GM12878 (cell line): ENCODE measurements at regions of chr2 and their contacts with region 1.

Region 1: GRCh38 chr2:172465417-172466334 is 38.3 kb downstream of the ITGA6 start:
- DNase-seq: no peak
- ATAC-seq: peak; percentile 65
- H3K4me3 ChIP-seq: no peak overlapping the region
- H3K27ac ChIP-seq: no peak overlapping the region
- H3K4me1 ChIP-seq: peaks cover 8% of the 10 kb centered on the region
- H3K27me3 ChIP-seq: peaks cover 0 to 5% of the 10 kb centered on the region in 2 experiments; a peak in 3 of 4 replicates
- CTCF ChIP-seq: peak; percentile 76 to 79 (median 76)
- EP300 ChIP-seq: no peak
- POLR2A ChIP-seq: no peak
- RAD21 ChIP-seq: peak; percentile 86

Region 2: DNA sequence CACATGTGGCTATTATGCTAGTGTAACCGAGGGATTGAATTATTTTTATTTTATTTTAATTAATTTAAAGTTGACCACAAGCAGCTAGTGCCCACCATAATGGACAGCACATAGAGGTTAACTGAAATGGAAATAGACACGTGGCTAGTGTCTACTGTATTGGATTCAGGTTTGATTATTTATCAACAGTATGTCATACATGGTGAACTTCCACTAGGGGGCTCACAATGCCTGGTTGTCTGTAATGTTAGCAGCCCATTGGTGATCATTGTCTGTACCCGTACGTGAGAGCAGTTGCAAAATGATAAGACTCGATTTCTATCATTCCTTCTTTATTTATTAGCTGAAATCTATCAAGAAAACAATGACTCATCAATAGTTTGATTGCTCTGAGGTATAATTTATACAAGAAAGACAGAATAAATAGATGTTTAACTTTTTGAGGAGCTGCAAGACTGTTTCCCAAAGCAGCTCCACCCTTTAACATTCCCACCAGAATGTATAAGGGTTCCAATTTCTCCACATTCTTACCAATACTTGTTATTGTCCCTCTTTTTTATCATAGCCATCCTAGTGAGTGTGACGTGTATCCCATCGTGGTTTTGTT is 866.9 kb before region 1 on chr2:
- CTCF ChIA-PET with region 1: interaction called, 4 read pairs
- POLR2A ChIA-PET with region 1: no interaction called
- RAD21 ChIA-PET with region 1: interaction called, 6 read pairs
- SMC1A ChIA-PET with region 1: no interaction called
- in situ Hi-C with region 1: loop called (anchors 10 kb)
- intact Hi-C with region 1: loop called (anchors 2 kb)
- DNase-seq: peak; percentile 24
- ATAC-seq: peak; percentile 100
- H3K4me3 ChIP-seq: no peak overlapping the region
- H3K27ac ChIP-seq: no peak overlapping the region
- H3K4me1 ChIP-seq: no peaks in the 10 kb centered on the region
- H3K27me3 ChIP-seq: no peaks in the 10 kb centered on the region
- CTCF ChIP-seq: peak; percentile 71 to 85 (median 82)
- EP300 ChIP-seq: no peak
- POLR2A ChIP-seq: no peak
- RAD21 ChIP-seq: peak; percentile 77

Region 3: GRCh38 chr2:172172513-172173173 is 293.0 kb before region 1 on chr2:
- CTCF ChIA-PET with region 1: interaction called, 6 read pairs
- POLR2A ChIA-PET with region 1: no interaction called
- RAD21 ChIA-PET with region 1: no interaction called
- SMC1A ChIA-PET with region 1: no interaction called
- in situ Hi-C with region 1: loop called (anchors 10 kb)
- intact Hi-C with region 1: loop called (anchors 10 kb)
- DNase-seq: no peak
- ATAC-seq: peak; percentile 76
- H3K4me3 ChIP-seq: no peak overlapping the region
- H3K27ac ChIP-seq: no peak overlapping the region
- H3K4me1 ChIP-seq: no peaks in the 10 kb centered on the region
- H3K27me3 ChIP-seq: peaks cover 0 to 1% of the 10 kb centered on the region in 2 experiments; a peak in 2 of 4 replicates
- CTCF ChIP-seq: peak; percentile 40 to 50 (median 43); a peak in 5 of 6 replicates
- EP300 ChIP-seq: no peak
- POLR2A ChIP-seq: no peak
- RAD21 ChIP-seq: peak; percentile 66

Region 4: GRCh38 chr2:172438741-172439508 is 26.8 kb before region 1 on chr2:
- CTCF ChIA-PET with region 1: interaction called, 17 read pairs
- POLR2A ChIA-PET with region 1: no interaction called
- RAD21 ChIA-PET with region 1: no interaction called
- SMC1A ChIA-PET with region 1: interaction called, 5 read pairs
- in situ Hi-C with region 1: no loop called
- intact Hi-C with region 1: no loop called
- DNase-seq: no peak
- ATAC-seq: no peak
- H3K4me3 ChIP-seq: no peak overlapping the region
- H3K27ac ChIP-seq: no peak overlapping the region
- H3K4me1 ChIP-seq: peaks cover 13% of the 10 kb centered on the region
- H3K27me3 ChIP-seq: peaks cover 0 to 5% of the 10 kb centered on the region in 2 experiments; a peak in 1 of 4 replicates
- CTCF ChIP-seq: no peak
- EP300 ChIP-seq: no peak
- POLR2A ChIP-seq: no peak
- RAD21 ChIP-seq: no peak